GM12878 (cell line): ENCODE measurements at regions of chr7 and their contacts with region 1.

Region 1: DNA sequence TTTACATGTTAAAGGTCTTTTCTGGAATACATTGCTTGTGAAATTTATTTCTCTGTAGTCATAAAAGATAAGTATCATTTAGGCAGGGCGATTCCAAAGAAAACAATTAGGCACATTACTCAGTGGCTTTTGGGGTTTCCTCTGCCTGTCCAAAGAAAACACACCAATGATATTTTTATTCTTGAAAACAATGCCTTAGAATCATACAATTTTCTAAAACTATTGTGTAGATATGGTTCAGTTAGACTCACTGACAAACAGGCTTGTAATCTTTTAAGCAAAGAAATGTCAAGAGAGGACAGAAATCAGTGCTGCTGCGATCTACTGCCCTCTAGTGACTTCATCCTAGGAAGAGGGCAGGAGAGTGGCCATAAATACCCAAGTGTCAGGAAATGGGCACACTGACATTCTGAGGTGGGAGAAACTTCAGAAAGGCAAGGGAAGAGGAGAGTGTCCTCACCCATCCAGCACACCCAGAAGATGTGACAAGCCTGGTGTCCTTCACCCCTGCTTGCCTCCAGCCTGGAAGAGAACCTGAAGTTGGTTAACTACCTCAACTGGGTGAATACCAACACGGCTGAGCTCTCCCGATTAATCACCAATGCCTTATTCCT is 120.5 kb downstream of the GALNT11 start:
- DNase-seq: no peak
- ATAC-seq: peak; percentile 68
- H3K4me3 ChIP-seq: no peak overlapping the region
- H3K27ac ChIP-seq: no peak overlapping the region
- H3K4me1 ChIP-seq: no peaks in the 10 kb centered on the region
- H3K27me3 ChIP-seq: no peaks in the 10 kb centered on the region
- CTCF ChIP-seq: peak; percentile 36 to 42 (median 40); a peak in 5 of 6 replicates
- EP300 ChIP-seq: no peak
- POLR2A ChIP-seq: no peak
- RAD21 ChIP-seq: peak; percentile 32; the same call in 1 of the 2 replicates

Region 2: GRCh38 chr7:151472644-151473380 is 673.1 kb before region 1 on chr7:
- CTCF ChIA-PET with region 1: no interaction called
- POLR2A ChIA-PET with region 1: no interaction called
- RAD21 ChIA-PET with region 1: no interaction called
- SMC1A ChIA-PET with region 1: no interaction called
- in situ Hi-C with region 1: no loop called
- intact Hi-C with region 1: no loop called
- DNase-seq: peak; percentile 83
- ATAC-seq: peak; percentile 77
- H3K4me3 ChIP-seq: peak overlapping the region; percentile 54
- H3K27ac ChIP-seq: peak overlapping the region; percentile 96
- H3K4me1 ChIP-seq: peaks cover 45% of the 10 kb centered on the region
- H3K27me3 ChIP-seq: no peaks in the 10 kb centered on the region
- CTCF ChIP-seq: peak in 2 of 3 experiments; percentile 5 to 7; a peak in 2 of 6 replicates
- EP300 ChIP-seq: peak; percentile 76 to 90; a peak in 3 of 4 replicates
- POLR2A ChIP-seq: peak; percentile 25; the same call in 1 of the 2 replicates
- RAD21 ChIP-seq: no peak

Region 3: GRCh38 chr7:152177681-152178404 is 31.9 kb after region 1 on chr7:
- CTCF ChIA-PET with region 1: no interaction called
- POLR2A ChIA-PET with region 1: interaction called, 14 read pairs
- RAD21 ChIA-PET with region 1: no interaction called
- SMC1A ChIA-PET with region 1: no interaction called
- in situ Hi-C with region 1: no loop called
- intact Hi-C with region 1: no loop called
- DNase-seq: no peak
- ATAC-seq: no peak
- H3K4me3 ChIP-seq: no peak overlapping the region
- H3K27ac ChIP-seq: peak overlapping the region; percentile 13; the same call in 1 of the 2 replicates
- H3K4me1 ChIP-seq: peaks cover 14% of the 10 kb centered on the region
- H3K27me3 ChIP-seq: no peaks in the 10 kb centered on the region
- CTCF ChIP-seq: no peak
- EP300 ChIP-seq: no peak
- POLR2A ChIP-seq: no peak
- RAD21 ChIP-seq: no peak